Activated CD4-positive, alpha-beta memory T cell treated with anti-CD3 and anti-CD28 coated beads for 36 hours (primary cell): ENCODE measurements at regions of chr2 and their contacts with region 1.

Region 1: DNA sequence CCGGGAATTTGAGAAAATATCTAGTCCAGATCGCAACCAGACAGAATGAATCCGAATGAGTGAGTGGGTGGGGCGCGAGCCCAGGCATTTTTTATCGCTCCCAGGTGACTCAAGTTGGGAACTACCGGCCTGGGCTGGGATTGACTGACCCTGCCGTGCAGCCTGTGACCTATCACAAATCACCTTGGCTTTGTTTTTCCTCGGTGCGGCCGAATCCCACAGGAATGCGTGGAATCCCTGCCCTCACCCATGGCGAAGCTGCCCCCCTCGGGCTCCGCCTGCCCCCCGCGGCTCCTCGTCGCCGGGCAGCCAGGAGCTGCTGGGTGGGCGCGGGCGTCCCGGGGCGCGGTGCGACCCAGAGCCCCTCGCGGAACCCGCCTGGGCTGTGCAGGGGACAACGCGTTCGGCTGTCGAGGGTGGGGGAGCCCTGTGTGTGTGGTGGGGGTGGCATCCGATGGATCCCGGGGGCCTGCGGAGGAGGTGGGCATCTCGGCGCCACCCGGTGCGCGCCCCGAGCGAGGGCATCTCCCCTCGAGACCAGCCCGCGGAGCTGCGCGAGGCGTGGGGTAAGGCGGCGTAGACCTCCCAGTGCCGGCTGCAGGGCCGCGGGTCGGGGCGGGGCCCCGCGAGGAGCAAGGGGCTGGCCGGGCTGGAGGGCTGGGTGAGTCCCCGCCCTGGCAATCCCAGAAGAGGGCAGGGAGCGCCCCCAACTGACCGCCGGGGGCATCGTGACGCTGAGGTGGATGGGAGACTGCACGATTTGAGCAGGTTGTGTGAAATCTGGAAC is 16.5 kb downstream of the B3GNT7 start:
- DNase-seq: peak; percentile 79
- H3K4me3 Mint-ChIP-seq: peak overlapping the region; percentile 29
- H3K27ac Mint-ChIP-seq: no peak overlapping the region
- H3K4me1 Mint-ChIP-seq: peaks cover 7% of the 10 kb centered on the region
- H3K27me3 Mint-ChIP-seq: peaks cover 36% of the 10 kb centered on the region

Region 2: DNA sequence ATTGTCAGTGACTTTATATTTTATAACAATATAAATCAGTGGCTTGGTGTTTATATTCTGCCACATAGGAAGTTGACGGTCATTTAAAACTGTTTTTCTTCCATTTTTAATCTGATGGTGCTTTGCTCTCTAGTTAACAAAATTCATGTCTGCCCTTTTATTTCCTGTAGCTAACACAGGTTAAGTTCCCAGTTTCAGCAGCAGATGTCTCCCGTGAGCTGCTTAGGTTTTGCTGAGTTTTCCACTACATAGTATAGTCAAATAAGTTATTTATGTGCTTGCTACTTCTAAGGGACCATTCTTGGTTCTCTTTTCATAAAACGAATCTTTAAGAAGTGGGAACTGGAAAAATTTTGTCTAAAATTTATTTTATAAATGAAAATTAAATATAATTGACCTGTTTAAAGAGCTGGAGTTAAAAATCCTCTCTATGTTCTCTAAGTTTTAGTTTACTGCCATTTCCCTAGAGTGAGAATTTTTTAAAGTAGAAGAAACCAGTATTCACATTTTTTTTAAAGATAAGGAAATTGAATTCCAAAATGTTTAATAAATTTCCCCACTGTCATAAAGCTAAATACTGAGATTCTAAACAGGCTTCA is 307.8 kb before region 1 on chr2:
- CTCF ChIA-PET with region 1: interaction called, 20 read pairs
- POLR2A ChIA-PET with region 1: no interaction called
- intact Hi-C with region 1: loop called (anchors 5 kb)
- DNase-seq: peak; percentile 71
- H3K4me3 Mint-ChIP-seq: no peak overlapping the region
- H3K27ac Mint-ChIP-seq: peak overlapping the region; percentile 1
- H3K4me1 Mint-ChIP-seq: peaks cover 11% of the 10 kb centered on the region
- H3K27me3 Mint-ChIP-seq: no peaks in the 10 kb centered on the region

Region 3: DNA sequence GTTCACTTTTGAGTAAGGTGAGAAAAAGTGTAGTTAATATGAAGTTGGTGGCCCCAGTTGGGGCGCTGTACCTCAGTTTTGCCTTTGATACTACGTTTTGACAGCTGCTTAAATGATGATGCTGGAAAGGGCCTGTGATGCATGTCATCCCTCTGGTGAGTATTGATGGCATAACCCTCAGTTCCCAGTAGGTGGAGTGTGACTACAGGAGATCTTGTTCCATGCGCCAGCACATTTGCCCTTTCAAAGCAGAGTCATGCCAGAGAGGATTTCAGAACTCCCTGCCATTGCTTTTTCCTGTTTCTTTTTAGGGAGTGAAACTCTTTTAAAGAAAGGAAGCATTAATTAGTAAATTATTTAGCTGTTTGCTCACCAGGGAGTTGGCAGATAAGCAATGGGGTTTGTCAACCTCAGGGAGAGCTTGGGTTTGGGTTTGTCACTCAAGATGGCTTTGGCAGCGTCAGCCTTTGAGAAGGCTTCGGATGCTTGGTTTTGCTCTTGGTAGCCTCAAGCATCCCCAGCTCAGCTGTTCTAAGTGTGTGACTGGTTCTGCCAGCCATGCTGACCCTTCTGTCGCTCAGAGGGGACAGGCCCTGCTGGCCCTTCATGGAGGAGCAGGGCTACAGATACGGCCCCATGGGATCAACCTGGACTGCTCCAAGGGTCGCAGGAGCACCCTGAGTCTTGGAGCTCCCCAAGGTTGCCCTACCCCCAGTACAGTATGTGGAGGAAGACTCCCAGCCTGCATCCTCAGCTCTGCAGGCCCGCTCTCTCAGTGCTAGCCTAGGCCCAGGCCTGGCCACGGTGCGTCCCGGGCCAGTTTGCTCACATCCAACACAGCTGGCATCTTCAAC is 184.5 kb before region 1 on chr2:
- CTCF ChIA-PET with region 1: interaction called, 32 read pairs
- POLR2A ChIA-PET with region 1: no interaction called
- intact Hi-C with region 1: loop called (anchors 1 kb)
- DNase-seq: peak; percentile 51
- H3K4me3 Mint-ChIP-seq: no peak overlapping the region
- H3K27ac Mint-ChIP-seq: no peak overlapping the region
- H3K4me1 Mint-ChIP-seq: no peaks in the 10 kb centered on the region
- H3K27me3 Mint-ChIP-seq: no peaks in the 10 kb centered on the region

Region 4: DNA sequence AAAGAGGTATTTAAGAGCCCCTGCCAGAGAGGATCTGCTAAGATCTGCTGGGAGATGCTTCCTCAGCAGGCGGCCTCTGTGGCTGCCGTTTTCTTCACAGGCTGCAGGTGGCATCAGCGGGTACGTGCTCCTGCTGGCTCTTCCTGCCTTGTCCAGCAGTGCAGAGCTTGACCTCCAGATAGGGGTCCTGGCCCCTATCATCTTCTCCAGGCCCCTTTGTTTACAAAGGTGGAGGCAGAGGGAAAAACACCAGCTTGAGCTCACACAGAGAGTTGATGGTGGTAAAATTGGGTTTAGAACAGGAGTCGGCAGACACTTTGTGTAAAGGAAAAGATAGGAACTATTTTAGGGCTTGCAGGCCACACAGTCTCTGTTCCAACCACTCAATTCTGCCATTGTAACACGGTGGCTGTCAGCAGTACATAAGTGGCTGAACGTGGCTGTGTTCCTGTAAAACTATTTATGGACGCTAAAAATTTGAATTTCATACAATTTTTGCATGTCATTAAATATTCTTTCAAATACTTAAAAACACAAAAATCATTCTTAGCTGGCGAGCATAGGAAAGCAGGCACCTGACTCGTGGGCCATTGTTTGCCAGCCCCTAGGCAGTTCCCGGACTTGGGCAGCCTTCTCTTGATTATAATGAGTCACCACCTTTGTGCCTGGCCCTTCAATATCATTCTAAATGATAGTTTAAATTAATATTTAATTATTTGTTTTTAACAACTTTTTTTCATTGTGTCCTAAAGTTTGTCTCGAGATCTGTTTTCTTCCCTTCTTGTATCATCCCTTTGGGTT is 114.7 kb before region 1 on chr2:
- CTCF ChIA-PET with region 1: interaction called, 7 read pairs
- POLR2A ChIA-PET with region 1: no interaction called
- intact Hi-C with region 1: loop called (anchors 2 kb)
- DNase-seq: peak; percentile 42
- H3K4me3 Mint-ChIP-seq: no peak overlapping the region
- H3K27ac Mint-ChIP-seq: no peak overlapping the region
- H3K4me1 Mint-ChIP-seq: no peaks in the 10 kb centered on the region
- H3K27me3 Mint-ChIP-seq: no peaks in the 10 kb centered on the region

Region 5: DNA sequence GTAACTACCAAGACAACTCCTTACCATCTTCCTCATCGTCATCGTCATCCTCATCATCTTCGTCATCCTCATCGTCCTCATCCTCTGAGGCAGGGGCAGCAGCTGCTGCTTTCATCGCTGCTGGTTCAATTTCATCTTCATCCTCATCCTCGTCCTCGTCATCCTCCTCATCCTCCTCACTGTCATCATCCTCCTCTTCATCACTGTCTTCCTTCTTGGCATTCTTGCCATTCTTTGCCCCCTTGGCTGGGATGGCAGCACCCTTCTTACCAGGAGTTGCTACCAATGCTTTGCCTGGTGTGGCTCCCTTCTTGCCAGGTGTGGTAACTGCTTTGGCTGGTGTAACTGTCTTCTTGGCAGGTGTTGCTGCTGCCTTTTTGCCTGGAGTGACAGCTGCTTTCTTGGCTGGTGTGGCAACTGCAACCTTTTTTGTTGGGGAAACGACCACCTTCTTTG is 49.5 kb after region 1 on chr2:
- CTCF ChIA-PET with region 1: no interaction called
- POLR2A ChIA-PET with region 1: no interaction called
- intact Hi-C with region 1: no loop called
- DNase-seq: no peak
- H3K4me3 Mint-ChIP-seq: peak overlapping the region; percentile 96
- H3K27ac Mint-ChIP-seq: peak overlapping the region; percentile 93
- H3K4me1 Mint-ChIP-seq: peaks cover 61% of the 10 kb centered on the region
- H3K27me3 Mint-ChIP-seq: no peaks in the 10 kb centered on the region